ENCODE measurements at regions of chr13 and their contacts with region 1.

Region 1: GRCh38 chr13:49436890-49437289 is 7.0 kb downstream of the CAB39L start:
- DNase-seq: peak; percentile 51 to 69
- H3K4me3 ChIP-seq: no peak overlapping the region
- H3K27ac ChIP-seq: peak overlapping the region; percentile 34 to 37
- H3K4me1 ChIP-seq: peaks cover 0 to 13% (median 0%) of the 10 kb centered on the region in 4 donors
- H3K27me3 ChIP-seq: no peaks in the 10 kb centered on the region
- CTCF ChIP-seq: peak; percentile 20 to 59

Region 2: DNA sequence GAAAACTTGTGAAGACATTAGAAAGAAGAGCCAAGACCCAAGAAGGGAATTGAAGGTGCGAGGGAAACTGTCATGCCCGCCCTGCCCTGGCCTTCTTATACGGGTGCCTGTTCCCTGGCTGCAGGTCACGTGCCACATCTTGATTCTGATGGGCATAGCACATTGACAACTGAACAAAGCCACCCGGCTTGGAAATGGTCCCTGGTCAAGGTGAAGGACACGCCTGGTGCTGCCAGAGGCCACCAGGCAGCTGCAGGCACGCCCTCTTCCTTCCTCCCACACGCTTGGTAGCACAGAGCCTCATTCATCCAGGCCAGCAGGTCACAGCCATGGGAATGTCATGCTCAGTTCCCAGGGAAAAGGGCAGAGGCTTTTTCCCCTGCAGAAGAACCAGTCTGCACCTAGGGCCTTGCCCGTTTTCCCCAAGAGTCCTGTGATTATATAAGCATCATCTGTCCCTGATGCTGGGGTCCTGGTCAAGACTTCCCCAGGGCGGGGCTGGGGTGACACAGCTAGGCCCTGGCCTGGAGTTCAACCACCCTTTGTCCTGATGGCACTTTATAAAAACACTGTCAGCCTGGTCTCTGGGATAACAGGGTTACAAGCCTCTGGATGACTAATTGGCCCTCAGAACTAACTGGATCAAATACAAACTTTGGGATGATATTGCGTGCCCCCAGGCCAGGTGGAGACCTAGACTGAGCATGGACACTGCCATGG is 133.2 kb before region 1 on chr13:
- intact Hi-C with region 1: loop called (anchors 2 kb)
- DNase-seq: peak in 1 of 2 donors; percentile 32
- H3K4me3 ChIP-seq: no peak overlapping the region
- H3K27ac ChIP-seq: peak overlapping the region; percentile 24 to 29
- H3K4me1 ChIP-seq: peaks cover 0 to 65% (median 32%) of the 10 kb centered on the region in 4 donors
- H3K27me3 ChIP-seq: no peaks in the 10 kb centered on the region
- CTCF ChIP-seq: no peak

Measured in tibial artery (tissue), 4 donors.